MCF 10A (cell line): ENCODE measurements at regions of chr1 and their contacts with region 1.

Region 1: DNA sequence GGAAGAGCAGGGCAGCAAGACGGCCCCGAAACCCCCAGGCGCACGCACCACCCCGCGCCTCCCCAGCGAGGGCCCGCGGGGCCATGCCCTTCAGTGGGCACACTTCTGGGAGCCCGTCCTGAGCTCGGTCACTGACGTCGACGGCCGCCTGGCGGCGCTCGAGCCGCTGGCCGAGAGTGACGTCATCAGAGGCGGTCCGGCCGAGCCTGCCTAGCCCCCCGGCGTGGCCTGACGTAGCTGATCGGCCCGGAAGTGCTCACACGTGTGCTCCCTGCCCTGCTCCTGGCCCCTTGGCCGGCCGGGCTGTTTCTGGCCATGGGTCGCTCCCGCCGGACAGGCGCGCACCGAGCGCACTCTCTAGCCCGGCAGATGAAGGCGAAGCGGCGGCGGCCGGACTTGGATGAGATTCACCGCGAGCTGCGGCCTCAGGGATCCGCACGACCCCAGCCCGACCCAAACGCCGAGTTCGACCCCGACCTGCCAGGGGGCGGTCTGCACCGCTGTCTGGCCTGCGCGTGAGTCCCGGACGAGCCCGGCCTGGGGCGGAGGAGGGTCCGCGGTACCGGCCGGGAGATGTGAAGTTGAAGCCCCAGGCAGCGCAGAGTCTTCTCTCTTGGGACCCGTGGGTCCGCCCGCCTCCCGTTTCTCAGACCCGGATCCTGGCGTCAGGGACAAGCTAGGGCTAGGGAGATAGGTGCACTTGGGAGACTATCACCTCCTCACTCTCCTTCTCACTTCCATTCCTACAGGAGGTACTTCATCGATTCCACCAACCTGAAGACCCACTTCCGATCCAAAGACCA is at the start of gene ZNF593:
- DNase-seq: peak; percentile 86
- H3K4me3 Mint-ChIP-seq: peak within 1 kb of the TSS; percentile 86
- H3K27ac Mint-ChIP-seq: peak within 1 kb of the TSS; percentile 93
- H3K4me1 Mint-ChIP-seq: no peaks in the 10 kb centered on the region
- H3K27me3 Mint-ChIP-seq: no peaks in the 10 kb centered on the region
- CTCF ChIP-seq: peak; percentile 91
- total RNA-seq, gene ZNF593: 61.5 and 82.6 TPM in 2 replicates

Region 2: GRCh38 chr1:25065795-25066238 is 1104.1 kb before region 1 on chr1:
- CTCF ChIA-PET with region 1: no interaction called
- POLR2A ChIA-PET with region 1: no interaction called
- intact Hi-C with region 1: no loop called
- DNase-seq: no peak
- H3K4me3 Mint-ChIP-seq: no peak overlapping the region
- H3K27ac Mint-ChIP-seq: no peak overlapping the region
- H3K4me1 Mint-ChIP-seq: peaks cover 6% of the 10 kb centered on the region
- H3K27me3 Mint-ChIP-seq: no peaks in the 10 kb centered on the region
- CTCF ChIP-seq: no peak

Region 3: GRCh38 chr1:25431506-25431881 is 738.4 kb before region 1 on chr1:
- CTCF ChIA-PET with region 1: no interaction called
- POLR2A ChIA-PET with region 1: no interaction called
- intact Hi-C with region 1: no loop called
- DNase-seq: no peak
- H3K4me3 Mint-ChIP-seq: peak overlapping the region; percentile 81
- H3K27ac Mint-ChIP-seq: no peak overlapping the region
- H3K4me1 Mint-ChIP-seq: peaks cover 30% of the 10 kb centered on the region
- H3K27me3 Mint-ChIP-seq: no peaks in the 10 kb centered on the region
- CTCF ChIP-seq: no peak

Region 4: DNA sequence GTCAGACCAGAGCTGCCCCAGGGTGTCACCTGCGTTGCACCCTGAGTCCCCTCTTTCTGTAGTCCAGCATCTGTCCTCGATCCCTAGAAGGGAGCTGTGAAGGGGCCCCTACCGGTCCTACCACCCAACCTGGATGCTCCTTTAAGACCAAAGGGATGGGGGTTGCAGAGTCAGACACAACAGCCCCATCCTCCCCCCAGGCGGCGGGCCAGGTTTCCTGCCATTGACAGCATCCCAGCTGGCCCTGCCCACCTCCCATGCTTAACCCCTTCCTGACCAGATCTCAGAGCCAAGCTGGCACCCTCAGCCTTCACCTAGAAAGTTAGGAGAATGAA is 13.2 kb before region 1 on chr1:
- CTCF ChIA-PET with region 1: interaction called, 14 read pairs
- POLR2A ChIA-PET with region 1: no interaction called
- intact Hi-C with region 1: no loop called
- DNase-seq: no peak
- H3K4me3 Mint-ChIP-seq: no peak overlapping the region
- H3K27ac Mint-ChIP-seq: no peak overlapping the region
- H3K4me1 Mint-ChIP-seq: no peaks in the 10 kb centered on the region
- H3K27me3 Mint-ChIP-seq: no peaks in the 10 kb centered on the region
- CTCF ChIP-seq: no peak

Region 5: GRCh38 chr1:26259578-26259977 is 89.7 kb after region 1 on chr1:
- CTCF ChIA-PET with region 1: no interaction called
- POLR2A ChIA-PET with region 1: no interaction called
- intact Hi-C with region 1: no loop called
- DNase-seq: no peak
- H3K4me3 Mint-ChIP-seq: no peak overlapping the region
- H3K27ac Mint-ChIP-seq: no peak overlapping the region
- H3K4me1 Mint-ChIP-seq: no peaks in the 10 kb centered on the region
- H3K27me3 Mint-ChIP-seq: no peaks in the 10 kb centered on the region
- CTCF ChIP-seq: no peak